CD4-positive, alpha-beta memory T cell (primary cell): ENCODE measurements at regions of chrX and their contacts with region 1.

Region 1: GRCh38 chrX:78024349-78025108 is 55.1 kb upstream of the PGAM4 start:
- DNase-seq: peak; percentile 33 to 56 (median 53)
- H3K4me3 ChIP-seq: no peak overlapping the region
- H3K4me3 Mint-ChIP-seq: no peak overlapping the region
- H3K27ac ChIP-seq: no peak overlapping the region
- H3K27ac Mint-ChIP-seq: peak overlapping the region in 3 of 7 donors; percentile 17 to 38 (median 28)
- H3K4me1 ChIP-seq: no peaks in the 10 kb centered on the region
- H3K4me1 Mint-ChIP-seq: peaks cover 0 to 7% (median 3%) of the 10 kb centered on the region in 4 donors
- H3K27me3 ChIP-seq: no peaks in the 10 kb centered on the region
- H3K27me3 Mint-ChIP-seq: no peaks in the 10 kb centered on the region

Region 2: GRCh38 chrX:76850851-76851250 is 1173.7 kb before region 1 on chrX:
- CTCF ChIA-PET with region 1: no interaction called
- POLR2A ChIA-PET with region 1: no interaction called
- intact Hi-C with region 1: no loop called
- DNase-seq: no peak
- H3K4me3 ChIP-seq: no peak overlapping the region
- H3K4me3 Mint-ChIP-seq: no peak overlapping the region
- H3K27ac ChIP-seq: no peak overlapping the region
- H3K27ac Mint-ChIP-seq: no peak overlapping the region
- H3K4me1 ChIP-seq: no peaks in the 10 kb centered on the region
- H3K4me1 Mint-ChIP-seq: no peaks in the 10 kb centered on the region
- H3K27me3 ChIP-seq: no peaks in the 10 kb centered on the region
- H3K27me3 Mint-ChIP-seq: no peaks in the 10 kb centered on the region

Region 3: DNA sequence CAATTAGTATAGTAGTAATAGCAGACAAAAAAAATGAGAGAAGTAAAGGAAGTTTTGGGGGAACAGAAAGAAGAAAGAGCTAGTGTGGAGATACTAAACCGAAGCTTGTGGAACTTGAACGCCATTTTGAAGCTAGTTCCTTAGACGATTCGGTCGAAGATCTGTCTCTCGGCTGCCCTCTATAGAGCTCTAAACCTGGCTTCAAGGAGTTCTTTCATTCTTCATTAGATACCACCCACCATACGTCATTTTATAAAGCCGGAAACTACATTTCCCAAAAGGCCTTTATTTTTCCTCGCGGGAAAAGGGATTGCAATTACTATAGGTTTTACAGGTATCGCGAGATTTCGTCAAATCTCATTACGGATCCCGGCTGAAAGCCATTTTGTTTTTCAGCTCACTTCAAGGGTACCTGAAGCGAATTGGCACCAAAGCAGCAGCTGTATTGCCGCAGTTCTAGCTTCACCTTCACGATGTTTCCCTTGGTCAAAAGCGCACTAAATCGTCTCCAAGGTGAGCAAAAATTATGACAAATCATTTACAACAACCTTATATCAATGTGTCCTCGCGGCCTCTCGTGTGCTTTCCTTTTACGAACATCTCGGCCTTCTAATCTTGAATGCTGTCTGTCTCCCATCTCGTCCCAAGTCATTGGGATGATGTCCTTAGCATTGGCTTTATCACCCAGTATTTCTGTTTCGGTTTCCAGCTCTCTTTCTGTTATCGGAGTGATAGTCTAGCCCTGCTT is 125.3 kb before region 1 on chrX and contains the start of gene COX7B:
- CTCF ChIA-PET with region 1: interaction called, 23 read pairs
- POLR2A ChIA-PET with region 1: no interaction called
- intact Hi-C with region 1: no loop called
- DNase-seq: peak; percentile 82 to 91 (median 88)
- H3K4me3 ChIP-seq: peak within 1 kb of the TSS; percentile 42 to 76
- H3K4me3 Mint-ChIP-seq: peak within 1 kb of the TSS; percentile 84 to 96 (median 91)
- H3K27ac ChIP-seq: peak within 1 kb of the TSS; percentile 81
- H3K27ac Mint-ChIP-seq: peak within 1 kb of the TSS; percentile 88 to 99 (median 95)
- H3K4me1 ChIP-seq: peaks cover 25% of the 10 kb centered on the region
- H3K4me1 Mint-ChIP-seq: peaks cover 7 to 49% (median 20%) of the 10 kb centered on the region in 4 donors
- H3K27me3 ChIP-seq: no peaks in the 10 kb centered on the region
- H3K27me3 Mint-ChIP-seq: no peaks in the 10 kb centered on the region
- total RNA-seq, gene COX7B: 115 to 126 TPM

Region 4: DNA sequence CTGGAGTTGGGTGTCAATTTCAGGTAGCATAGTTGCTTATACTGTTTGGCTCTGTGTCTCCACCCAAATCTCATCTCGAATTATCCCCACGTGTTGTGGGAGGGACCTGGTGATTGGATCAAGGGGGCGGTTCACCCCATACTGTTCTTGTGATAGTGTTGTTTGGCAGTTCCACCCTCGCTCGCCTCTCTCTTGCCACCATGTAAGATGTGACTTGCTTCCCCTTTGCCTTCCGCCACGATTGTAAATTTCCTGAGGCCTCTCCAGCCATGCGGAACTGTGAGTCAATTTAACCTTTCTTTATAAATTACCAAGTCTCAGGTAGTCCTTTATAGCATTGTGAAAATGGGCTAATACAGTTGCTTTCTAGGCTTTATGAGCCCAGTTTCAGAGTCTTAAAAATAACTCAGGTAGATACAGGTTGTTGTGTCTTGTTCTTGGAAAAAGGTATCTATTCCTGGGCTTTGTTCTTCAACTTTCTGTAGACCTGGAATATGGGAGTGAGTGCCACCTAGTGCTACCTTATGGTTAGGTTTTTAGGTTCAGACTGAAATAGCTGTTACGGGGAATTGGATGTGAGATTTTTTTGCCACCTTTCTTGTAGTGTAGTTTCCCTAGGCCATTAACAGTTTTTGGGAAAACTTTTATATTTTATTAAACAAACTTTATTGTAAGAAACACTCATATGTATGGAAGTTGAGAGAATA is 95.1 kb after region 1 on chrX:
- CTCF ChIA-PET with region 1: no interaction called
- POLR2A ChIA-PET with region 1: no interaction called
- intact Hi-C with region 1: no loop called
- DNase-seq: no peak
- H3K4me3 ChIP-seq: no peak overlapping the region
- H3K4me3 Mint-ChIP-seq: peak overlapping the region in 1 of 8 donors; percentile 24
- H3K27ac ChIP-seq: no peak overlapping the region
- H3K27ac Mint-ChIP-seq: peak overlapping the region in 6 of 7 donors; percentile 24 to 72 (median 40)
- H3K4me1 ChIP-seq: peaks cover 32% of the 10 kb centered on the region
- H3K4me1 Mint-ChIP-seq: peaks cover 11 to 44% (median 29%) of the 10 kb centered on the region in 4 donors
- H3K27me3 ChIP-seq: no peaks in the 10 kb centered on the region
- H3K27me3 Mint-ChIP-seq: no peaks in the 10 kb centered on the region